ENCODE measurements at regions of chrX and their contacts with region 1.

Region 1: DNA sequence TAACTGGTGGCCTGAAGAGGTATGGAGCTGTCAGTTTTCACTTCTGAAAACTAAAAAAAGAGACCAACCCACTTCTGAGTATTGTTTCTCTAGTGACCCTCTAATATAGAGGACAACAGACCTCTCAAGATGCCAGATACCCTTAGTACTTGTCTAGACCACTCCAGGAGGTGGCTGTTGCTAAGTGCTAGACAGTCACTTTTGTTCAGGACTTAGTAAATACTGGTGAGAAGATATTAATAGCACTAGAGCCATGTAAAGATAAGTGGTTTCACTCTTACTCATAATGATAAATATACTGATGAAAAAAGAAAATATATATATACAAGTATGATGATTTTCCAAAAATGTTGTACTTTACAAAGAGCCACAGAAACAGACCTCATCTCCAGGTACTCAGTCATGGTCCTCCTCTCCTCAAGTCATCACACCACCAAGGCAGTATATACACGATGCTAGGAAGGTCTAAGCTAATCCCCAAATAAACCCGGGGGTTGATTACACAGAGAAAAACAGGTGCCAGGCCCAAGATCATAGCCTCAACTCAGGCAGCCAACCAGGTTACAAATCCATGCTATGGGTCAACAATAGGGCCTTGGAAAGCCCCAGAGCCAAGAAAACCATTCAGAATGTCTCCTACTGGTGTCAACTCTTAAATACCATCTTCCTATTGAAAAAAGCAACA is 66.9 kb downstream of the ARHGEF9 start:
- DNase-seq: no peak
- H3K4me3 ChIP-seq: no peak overlapping the region
- H3K27ac ChIP-seq: no peak overlapping the region
- H3K4me1 ChIP-seq: no peaks in the 10 kb centered on the region
- H3K27me3 ChIP-seq: no peaks in the 10 kb centered on the region
- CTCF ChIP-seq: no peak
- POLR2A ChIP-seq: no peak

Region 2: GRCh38 chrX:63657821-63658220 is 60.3 kb before region 1 on chrX:
- CTCF ChIA-PET with region 1: no interaction called
- POLR2A ChIA-PET with region 1: no interaction called
- dilution Hi-C with region 1: no loop called
- intact Hi-C with region 1: loop called (anchors 10 kb)
- DNase-seq: no peak
- H3K4me3 ChIP-seq: no peak overlapping the region
- H3K27ac ChIP-seq: no peak overlapping the region
- H3K4me1 ChIP-seq: no peaks in the 10 kb centered on the region
- H3K27me3 ChIP-seq: no peaks in the 10 kb centered on the region
- CTCF ChIP-seq: no peak
- POLR2A ChIP-seq: no peak

Region 3: DNA sequence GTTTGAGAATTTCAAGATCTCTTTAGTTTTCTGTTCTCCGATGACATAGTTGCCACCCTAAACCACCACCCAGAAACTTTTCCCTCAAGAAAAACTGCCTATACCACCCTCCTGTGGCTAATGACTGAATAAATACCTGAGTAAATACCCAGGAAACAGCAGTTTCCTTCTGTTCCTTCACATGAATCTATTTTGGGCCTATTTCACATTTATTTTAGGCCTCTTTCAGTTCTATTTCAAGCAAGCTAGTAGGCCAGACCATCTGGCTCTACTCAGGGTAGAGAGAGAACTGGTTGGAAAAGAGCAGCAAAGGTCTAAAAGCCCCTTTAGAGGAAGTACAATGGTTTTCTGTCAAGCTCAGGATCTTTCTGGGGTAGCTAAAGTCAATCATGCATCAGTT is 43.5 kb after region 1 on chrX:
- CTCF ChIA-PET with region 1: no interaction called
- POLR2A ChIA-PET with region 1: no interaction called
- dilution Hi-C with region 1: no loop called
- intact Hi-C with region 1: loop called (anchors 10 kb)
- DNase-seq: peak; percentile 3
- H3K4me3 ChIP-seq: no peak overlapping the region
- H3K27ac ChIP-seq: no peak overlapping the region
- H3K4me1 ChIP-seq: peaks cover 4% of the 10 kb centered on the region
- H3K27me3 ChIP-seq: no peaks in the 10 kb centered on the region
- CTCF ChIP-seq: no peak
- POLR2A ChIP-seq: no peak

Region 4: GRCh38 chrX:63993936-63994335 is 275.8 kb after region 1 on chrX:
- CTCF ChIA-PET with region 1: no interaction called
- POLR2A ChIA-PET with region 1: no interaction called
- dilution Hi-C with region 1: no loop called
- intact Hi-C with region 1: no loop called
- DNase-seq: no peak
- H3K4me3 ChIP-seq: no peak overlapping the region
- H3K27ac ChIP-seq: no peak overlapping the region
- H3K4me1 ChIP-seq: no peaks in the 10 kb centered on the region
- H3K27me3 ChIP-seq: no peaks in the 10 kb centered on the region
- CTCF ChIP-seq: no peak
- POLR2A ChIP-seq: no peak